Posterior cingulate gyrus (tissue), 11 donors: ENCODE measurements at regions of chr14 and their contacts with region 1.

Region 1: GRCh38 chr14:31456841-31457664 is at the start of gene DTD2:
- DNase-seq: peak; percentile 92 to 99 (median 96)

Region 2: GRCh38 chr14:31420319-31421111 is 36.5 kb before region 1 on chr14 and contains the start of gene HEATR5A:
- intact Hi-C with region 1: loop called (anchors 2 kb)
- DNase-seq: peak; percentile 90 to 99 (median 94)

Region 3: DNA sequence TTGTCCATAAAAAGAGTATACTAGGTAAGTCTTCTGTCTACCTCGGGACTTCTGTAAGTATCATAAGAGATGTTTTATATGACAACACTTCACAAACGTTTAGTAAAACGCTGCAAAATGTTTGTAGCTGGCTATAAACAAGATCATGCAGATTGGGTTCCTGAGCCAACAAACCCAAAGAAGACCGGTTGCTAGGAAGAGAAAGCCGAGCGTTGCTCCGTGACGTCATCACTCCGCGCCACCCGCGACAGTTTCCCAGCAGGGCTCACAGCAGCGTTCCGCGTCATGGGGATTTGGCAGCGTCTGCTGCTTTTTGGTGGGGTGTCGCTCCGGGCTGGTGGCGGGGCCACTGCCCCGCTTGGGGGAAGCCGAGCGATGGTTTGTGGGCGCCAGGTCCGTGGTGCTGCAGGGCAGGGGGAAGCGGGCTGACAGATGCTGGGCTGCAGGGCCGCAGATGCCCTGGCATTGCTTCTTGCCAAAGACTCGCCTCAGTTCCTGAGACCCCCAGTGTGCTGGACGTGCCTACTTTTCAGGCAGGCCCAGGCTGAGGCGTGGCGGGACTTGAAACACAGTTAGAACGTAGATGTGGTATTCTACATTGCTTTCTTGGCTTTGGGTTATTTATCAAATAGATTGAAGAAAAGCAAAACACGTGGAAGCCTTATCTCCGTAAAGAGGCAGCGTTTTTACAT is 104.2 kb after region 1 on chr14 and contains the start of gene NUBPL:
- intact Hi-C with region 1: loop called (anchors 2 kb)
- DNase-seq: peak; percentile 92 to 99 (median 94)